ENCODE measurements at regions of chr17 and their contacts with region 1.

Region 1: GRCh38 chr17:32142038-32142856 is at the start of gene RHOT1:
- DNase-seq: peak; percentile 79
- H3K4me3 ChIP-seq: peak within 1 kb of the TSS; percentile 89
- CTCF ChIP-seq: peak; percentile 52

Region 2: DNA sequence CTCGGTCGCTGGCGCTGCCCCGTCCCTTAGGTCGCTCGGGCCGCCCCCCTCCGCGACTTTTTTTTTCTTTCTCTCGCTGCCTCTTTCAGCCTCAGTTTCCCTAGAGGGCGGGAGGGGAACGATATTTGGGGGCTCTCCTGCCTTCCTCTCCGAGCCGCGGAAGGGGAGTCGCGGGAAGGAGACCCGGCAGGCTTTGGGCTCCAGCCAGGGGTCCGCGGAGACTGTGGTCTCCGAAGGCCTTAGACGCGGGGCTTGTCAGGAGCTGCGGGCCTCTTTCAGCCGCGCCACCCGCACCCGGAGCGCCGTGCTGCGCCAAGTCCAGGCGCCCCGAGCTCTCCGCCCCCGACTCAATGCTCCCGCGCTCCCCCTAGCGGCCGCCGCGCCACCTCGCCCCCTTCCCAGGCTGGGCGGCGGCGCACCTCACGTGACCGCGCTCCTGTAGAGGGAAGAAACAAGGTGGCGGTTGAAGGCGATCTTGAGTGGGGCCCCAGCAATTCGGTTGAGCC is 135.2 kb before region 1 on chr17 and contains the start of gene LRRC37B:
- in situ Hi-C with region 1: loop called (anchors 10 kb)
- DNase-seq: peak; percentile 28
- H3K4me3 ChIP-seq: peak within 1 kb of the TSS; percentile 91
- CTCF ChIP-seq: peak; percentile 85